ENCODE measurements at regions of chr9 and their contacts with region 1.

Region 1: GRCh38 chr9:98775831-98776441 is 20.4 kb downstream of the ANKS6 start:
- DNase-seq: peak; percentile 52
- H3K4me3 ChIP-seq: no peak overlapping the region
- H3K27ac ChIP-seq: no peak overlapping the region
- H3K27me3 ChIP-seq: no peaks in the 10 kb centered on the region
- CTCF ChIP-seq: peak; percentile 89

Region 2: DNA sequence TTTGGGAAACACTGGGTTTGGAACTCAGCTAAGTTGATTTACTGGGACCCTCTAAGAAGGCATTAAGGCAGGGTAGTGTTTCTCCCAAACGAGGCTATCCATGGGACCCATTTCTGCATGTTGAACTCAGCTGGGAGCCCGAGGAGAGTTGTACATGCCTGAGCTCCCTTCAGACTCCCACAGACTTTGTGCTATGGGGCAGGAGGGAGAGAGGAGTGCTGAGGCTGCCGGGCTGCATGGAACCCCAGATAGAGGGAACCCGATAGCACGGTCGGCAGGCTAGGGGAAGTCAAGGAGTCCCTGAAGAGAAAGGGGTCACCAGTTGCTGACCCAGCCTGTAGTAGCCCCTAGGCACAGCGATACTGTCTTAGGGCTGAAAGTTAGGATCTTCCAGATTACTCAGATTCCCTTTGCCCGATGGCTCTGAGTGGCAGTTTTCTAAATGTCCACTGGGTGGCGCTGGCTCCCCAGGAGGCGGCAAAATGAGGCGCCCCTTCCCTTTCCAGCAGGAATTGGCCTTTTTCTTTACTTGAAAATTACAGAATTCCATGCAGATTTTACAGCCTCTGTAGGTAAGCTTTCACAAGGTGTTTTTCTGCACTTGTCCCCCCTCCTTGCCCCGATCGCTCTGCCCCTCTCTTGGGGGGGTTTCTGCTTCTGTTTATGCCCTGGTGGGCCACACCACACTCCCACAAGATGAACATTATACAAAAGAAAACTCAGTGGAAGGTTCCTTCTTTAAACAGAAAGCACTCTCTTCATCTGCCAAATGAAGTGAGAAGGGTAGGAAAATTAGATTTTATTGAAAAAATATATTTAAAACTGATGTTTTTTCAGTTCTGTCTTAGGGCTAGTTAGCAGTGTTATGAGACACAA is 701.6 kb before region 1 on chr9:
- CTCF ChIA-PET with region 1: interaction called, 10 read pairs
- POLR2A ChIA-PET with region 1: no interaction called
- DNase-seq: no peak
- H3K4me3 ChIP-seq: no peak overlapping the region
- H3K27ac ChIP-seq: no peak overlapping the region
- H3K27me3 ChIP-seq: no peaks in the 10 kb centered on the region
- CTCF ChIP-seq: peak; percentile 96

Region 3: DNA sequence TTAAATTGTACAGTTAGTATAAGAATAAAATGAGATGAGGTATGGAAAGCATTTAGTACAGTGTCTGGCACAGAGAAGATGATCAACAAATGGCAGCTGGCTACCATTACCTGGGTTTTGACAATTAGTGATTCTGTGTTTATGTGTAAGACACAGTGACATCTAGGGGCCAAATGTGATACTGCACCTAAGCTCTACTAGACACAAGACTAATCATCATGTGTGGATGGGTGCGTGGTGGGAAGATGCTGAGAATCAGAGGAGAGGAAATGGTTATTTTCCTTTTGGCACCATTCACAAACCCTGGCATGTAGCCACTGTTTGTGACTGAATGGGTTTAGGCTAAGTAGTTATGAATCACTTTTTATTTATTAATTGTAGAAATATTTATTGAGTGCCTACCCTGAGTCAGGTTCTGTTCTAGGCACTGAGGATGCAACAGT is 410.7 kb before region 1 on chr9:
- CTCF ChIA-PET with region 1: interaction called, 18 read pairs
- POLR2A ChIA-PET with region 1: no interaction called
- DNase-seq: no peak
- H3K4me3 ChIP-seq: no peak overlapping the region
- H3K27ac ChIP-seq: no peak overlapping the region
- H3K27me3 ChIP-seq: no peaks in the 10 kb centered on the region
- CTCF ChIP-seq: peak; percentile 53

Region 4: DNA sequence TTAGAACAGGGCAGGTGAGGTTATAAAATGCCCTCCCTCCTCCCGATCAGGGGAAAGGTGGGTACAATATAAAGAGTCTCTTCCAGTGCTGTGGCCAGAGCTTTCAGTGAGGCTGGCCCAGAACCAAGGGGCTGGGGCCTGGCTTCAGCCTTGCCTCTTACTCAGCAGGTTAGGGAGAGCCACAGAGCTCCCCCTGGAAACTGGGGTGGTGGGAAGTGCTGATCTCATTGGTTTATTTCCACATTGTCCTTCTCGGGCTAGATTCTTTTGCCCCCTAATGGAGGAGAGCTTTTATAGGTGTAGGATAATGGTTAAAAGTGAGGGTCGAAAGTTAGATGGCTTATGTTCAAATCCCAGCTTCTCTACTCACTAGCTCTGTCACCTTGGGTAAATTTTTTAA is 333.8 kb before region 1 on chr9:
- CTCF ChIA-PET with region 1: interaction called, 11 read pairs
- POLR2A ChIA-PET with region 1: no interaction called
- DNase-seq: no peak
- H3K4me3 ChIP-seq: no peak overlapping the region
- H3K27ac ChIP-seq: no peak overlapping the region
- H3K27me3 ChIP-seq: peaks cover 11% of the 10 kb centered on the region
- CTCF ChIP-seq: no peak

Region 5: GRCh38 chr9:98678242-98678842 is 97.6 kb before region 1 on chr9:
- CTCF ChIA-PET with region 1: no interaction called
- POLR2A ChIA-PET with region 1: no interaction called
- DNase-seq: no peak
- H3K4me3 ChIP-seq: no peak overlapping the region
- H3K27ac ChIP-seq: no peak overlapping the region
- H3K27me3 ChIP-seq: peaks cover 20% of the 10 kb centered on the region
- CTCF ChIP-seq: peak; percentile 59

Region 6: GRCh38 chr9:98755006-98755575 is 20.8 kb before region 1 on chr9:
- CTCF ChIA-PET with region 1: interaction called, 72 read pairs
- POLR2A ChIA-PET with region 1: no interaction called
- DNase-seq: no peak
- H3K4me3 ChIP-seq: no peak overlapping the region
- H3K27ac ChIP-seq: no peak overlapping the region
- H3K27me3 ChIP-seq: no peaks in the 10 kb centered on the region
- CTCF ChIP-seq: no peak

Region 7: GRCh38 chr9:98807070-98807810 is 31.3 kb after region 1 on chr9 and contains the start of gene GALNT12:
- CTCF ChIA-PET with region 1: interaction called, 20 read pairs
- POLR2A ChIA-PET with region 1: no interaction called
- DNase-seq: no peak
- H3K4me3 ChIP-seq: peak within 1 kb of the TSS; percentile 66
- H3K27ac ChIP-seq: no peak within 1 kb of the TSS
- H3K27me3 ChIP-seq: peaks cover 19% of the 10 kb centered on the region
- CTCF ChIP-seq: no peak
- polyA plus RNA-seq, gene GALNT12: 2.8 and 4.2 TPM in 2 replicates